ENCODE measurements at regions of chr9 and their contacts with region 1.

Region 1: GRCh38 chr9:122264360-122265148 is at the starts of genes MRRF and RBM18:
- DNase-seq: peak; percentile 83 to 95 (median 90)

Region 2: GRCh38 chr9:122168356-122168755 is 96.2 kb before region 1 on chr9:
- intact Hi-C with region 1: loop called (anchors 10 kb)
- DNase-seq: no peak

Measured in head of caudate nucleus (tissue), 42 donors.